Naive thymus-derived CD4-positive, alpha-beta T cell (primary cell): ENCODE measurements at regions of chr3 and their contacts with region 1.

Region 1: GRCh38 chr3:101676765-101677435 is at the start of gene ZBTB11:
- DNase-seq: peak; percentile 98 to 100 (median 99)
- ATAC-seq: peak; percentile 80
- H3K4me3 ChIP-seq: peak within 1 kb of the TSS; percentile 91
- H3K4me3 Mint-ChIP-seq: peak within 1 kb of the TSS; percentile 87 to 97 (median 93)
- H3K27ac ChIP-seq: peak within 1 kb of the TSS; percentile 98
- H3K27ac Mint-ChIP-seq: peak within 1 kb of the TSS; percentile 93 to 100 (median 97)
- H3K4me1 ChIP-seq: peaks cover 23 to 26% of the 10 kb centered on the region in 2 donors
- H3K4me1 Mint-ChIP-seq: peaks cover 19 to 63% (median 54%) of the 10 kb centered on the region in 7 donors
- H3K27me3 ChIP-seq: no peaks in the 10 kb centered on the region
- H3K27me3 Mint-ChIP-seq: no peaks in the 10 kb centered on the region
- total RNA-seq, gene ZBTB11: 31.9 to 68.2 (median 54.2) TPM

Region 2: GRCh38 chr3:100260685-100261484 is 1416.0 kb before region 1 on chr3 and contains the start of gene TBC1D23:
- CTCF ChIA-PET with region 1: no interaction called
- POLR2A ChIA-PET with region 1: no interaction called
- intact Hi-C with region 1: loop called (anchors 1 to 5 kb)
- DNase-seq: peak; percentile 89 to 98 (median 96)
- ATAC-seq: peak; percentile 99
- H3K4me3 ChIP-seq: peak within 1 kb of the TSS; percentile 92
- H3K4me3 Mint-ChIP-seq: peak within 1 kb of the TSS; percentile 90 to 100 (median 94)
- H3K27ac ChIP-seq: peak within 1 kb of the TSS; percentile 89
- H3K27ac Mint-ChIP-seq: peak within 1 kb of the TSS; percentile 97 to 100 (median 99)
- H3K4me1 ChIP-seq: peaks cover 10 to 20% of the 10 kb centered on the region in 2 donors
- H3K4me1 Mint-ChIP-seq: peaks cover 37 to 75% (median 65%) of the 10 kb centered on the region in 7 donors
- H3K27me3 ChIP-seq: no peaks in the 10 kb centered on the region
- H3K27me3 Mint-ChIP-seq: no peaks in the 10 kb centered on the region
- total RNA-seq, gene TBC1D23: 30.8 to 42.4 (median 33.9) TPM

Region 3: GRCh38 chr3:101466465-101467309 is 210.2 kb before region 1 on chr3:
- CTCF ChIA-PET with region 1: no interaction called
- POLR2A ChIA-PET with region 1: no interaction called
- intact Hi-C with region 1: no loop called
- DNase-seq: peak in 8 of 9 donors; percentile 38 to 82 (median 58)
- ATAC-seq: peak; percentile 67
- H3K4me3 ChIP-seq: no peak overlapping the region
- H3K4me3 Mint-ChIP-seq: peak overlapping the region in 8 of 10 donors; percentile 4 to 86 (median 76)
- H3K27ac ChIP-seq: peak overlapping the region; percentile 63
- H3K27ac Mint-ChIP-seq: peak overlapping the region in 8 of 9 donors; percentile 52 to 96 (median 89)
- H3K4me1 ChIP-seq: peaks cover 3 to 17% of the 10 kb centered on the region in 2 donors
- H3K4me1 Mint-ChIP-seq: peaks cover 38 to 81% (median 72%) of the 10 kb centered on the region in 7 donors
- H3K27me3 ChIP-seq: no peaks in the 10 kb centered on the region
- H3K27me3 Mint-ChIP-seq: no peaks in the 10 kb centered on the region

Region 4: DNA sequence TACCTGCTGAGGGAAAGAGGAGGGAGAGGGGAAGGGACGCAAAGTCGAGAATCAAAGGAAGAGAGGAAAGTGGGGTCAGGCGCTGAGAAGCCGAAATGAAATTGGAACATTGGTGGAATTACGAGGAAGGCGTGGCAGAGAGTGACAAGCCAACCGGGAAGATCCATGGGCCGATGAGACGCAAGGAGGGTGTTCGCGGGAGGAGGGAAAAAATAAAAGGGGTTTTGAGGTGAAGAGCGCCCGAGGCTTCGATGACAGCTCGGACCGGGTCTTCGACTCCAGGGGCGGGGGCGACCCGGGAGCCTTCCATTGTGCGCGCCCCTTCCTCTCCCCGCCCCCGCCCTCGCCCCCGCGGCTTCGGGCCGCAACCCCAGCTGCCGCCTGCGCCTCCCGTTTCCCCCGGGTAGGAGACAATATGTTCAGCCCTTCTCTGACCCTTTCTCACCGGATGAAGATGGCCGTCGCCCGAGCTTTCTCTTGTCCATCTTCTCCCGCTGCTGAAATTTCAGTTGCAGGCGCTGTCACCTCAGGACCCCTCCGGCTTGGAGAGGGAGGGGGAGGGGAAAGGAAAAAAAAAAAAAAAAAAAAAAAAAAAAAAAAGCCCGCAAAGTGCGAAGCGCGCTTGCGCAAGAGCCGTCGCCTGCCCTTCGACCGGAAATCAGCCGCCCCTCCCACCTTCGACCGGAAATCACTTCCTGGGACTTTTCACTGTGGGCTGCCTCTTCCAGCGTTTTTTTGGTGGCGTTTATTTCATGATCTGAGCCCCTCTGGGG is 164.1 kb before region 1 on chr3 and contains the start of gene SENP7:
- CTCF ChIA-PET with region 1: interaction called, 3 read pairs
- POLR2A ChIA-PET with region 1: interaction called, 7 read pairs
- intact Hi-C with region 1: loop called (anchors 1 to 2 kb)
- DNase-seq: peak; percentile 55 to 82 (median 76)
- ATAC-seq: peak; percentile 74
- H3K4me3 ChIP-seq: peak within 1 kb of the TSS; percentile 84
- H3K4me3 Mint-ChIP-seq: peak within 1 kb of the TSS; percentile 98 to 100 (median 100)
- H3K27ac ChIP-seq: peak within 1 kb of the TSS; percentile 92
- H3K27ac Mint-ChIP-seq: peak within 1 kb of the TSS; percentile 96 to 100 (median 98)
- H3K4me1 ChIP-seq: peaks cover 24 to 41% of the 10 kb centered on the region in 2 donors
- H3K4me1 Mint-ChIP-seq: peaks cover 35 to 79% (median 70%) of the 10 kb centered on the region in 7 donors
- H3K27me3 ChIP-seq: no peaks in the 10 kb centered on the region
- H3K27me3 Mint-ChIP-seq: peaks cover 0 to 4% (median 0%) of the 10 kb centered on the region in 5 donors
- total RNA-seq, gene SENP7: 28.8 to 79.0 (median 49.5) TPM

Region 5: GRCh38 chr3:101561630-101562328 is 115.1 kb before region 1 on chr3 and contains the start of gene TRMT10C:
- CTCF ChIA-PET with region 1: no interaction called
- POLR2A ChIA-PET with region 1: interaction called, 3 read pairs
- intact Hi-C with region 1: loop called (anchors 1 kb)
- DNase-seq: peak; percentile 77 to 94 (median 91)
- ATAC-seq: peak; percentile 98
- H3K4me3 ChIP-seq: peak within 1 kb of the TSS; percentile 94
- H3K4me3 Mint-ChIP-seq: peak within 1 kb of the TSS; percentile 95 to 99 (median 99)
- H3K27ac ChIP-seq: peak within 1 kb of the TSS; percentile 93
- H3K27ac Mint-ChIP-seq: peak within 1 kb of the TSS; percentile 93 to 99 (median 98)
- H3K4me1 ChIP-seq: peaks cover 8 to 14% of the 10 kb centered on the region in 2 donors
- H3K4me1 Mint-ChIP-seq: peaks cover 19 to 48% (median 38%) of the 10 kb centered on the region in 7 donors
- H3K27me3 ChIP-seq: no peaks in the 10 kb centered on the region
- H3K27me3 Mint-ChIP-seq: peaks cover 2 to 10% (median 3%) of the 10 kb centered on the region in 5 donors
- total RNA-seq, gene TRMT10C: 24.1 to 32.7 (median 27.1) TPM

Region 6: DNA sequence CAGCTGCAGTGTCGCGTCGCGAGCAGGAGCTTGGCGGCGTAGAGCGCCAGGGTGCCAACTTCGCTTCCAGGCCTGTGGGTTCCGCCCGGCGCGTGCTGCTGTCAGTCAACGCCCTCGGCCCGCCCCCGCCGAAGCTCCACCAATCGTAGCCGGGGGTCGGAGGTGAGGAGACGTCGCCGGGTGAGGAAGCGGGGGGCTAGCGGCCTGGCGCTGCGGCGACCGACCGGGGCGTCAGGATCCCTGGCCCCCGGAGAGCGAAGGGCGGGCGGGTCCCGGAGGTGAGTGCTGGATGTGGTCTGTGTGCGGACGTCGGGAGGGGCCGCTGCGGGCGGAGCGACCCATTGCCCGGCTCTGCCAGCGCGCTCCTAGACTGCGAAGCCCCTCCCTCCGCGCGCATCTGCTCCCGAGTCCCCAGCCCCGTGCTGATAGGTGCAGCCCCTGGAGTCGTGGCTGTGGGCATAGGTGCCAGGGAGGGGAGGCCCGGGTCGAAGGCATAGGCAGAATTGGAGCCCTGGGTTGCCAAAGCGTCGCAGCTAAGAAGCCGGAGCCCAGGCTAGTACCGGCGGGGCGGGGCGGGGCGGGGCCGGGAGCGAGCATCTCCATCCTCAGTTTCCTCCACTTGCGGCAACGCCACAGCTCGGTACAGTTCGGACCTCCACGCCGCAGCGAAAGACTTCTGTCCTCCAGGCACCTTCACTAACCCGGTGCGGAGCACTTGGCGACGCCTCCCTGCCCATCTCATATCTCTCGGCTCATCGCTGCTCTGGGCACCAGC is 102.3 kb after region 1 on chr3 and contains the start of gene NXPE3:
- CTCF ChIA-PET with region 1: no interaction called
- POLR2A ChIA-PET with region 1: interaction called, 11 read pairs
- intact Hi-C with region 1: loop called (anchors 1 kb)
- DNase-seq: peak; percentile 92 to 97 (median 94)
- ATAC-seq: peak; percentile 95
- H3K4me3 ChIP-seq: peak within 1 kb of the TSS; percentile 60
- H3K4me3 Mint-ChIP-seq: peak within 1 kb of the TSS; percentile 89 to 99 (median 94)
- H3K27ac ChIP-seq: peak within 1 kb of the TSS; percentile 88
- H3K27ac Mint-ChIP-seq: peak within 1 kb of the TSS; percentile 93 to 100 (median 99)
- H3K4me1 ChIP-seq: peaks cover 27% of the 10 kb centered on the region in 2 donors
- H3K4me1 Mint-ChIP-seq: peaks cover 20 to 61% (median 53%) of the 10 kb centered on the region in 7 donors
- H3K27me3 ChIP-seq: no peaks in the 10 kb centered on the region
- H3K27me3 Mint-ChIP-seq: no peaks in the 10 kb centered on the region
- total RNA-seq, gene NXPE3: 25.9 to 48.7 (median 35.5) TPM

Region 7: DNA sequence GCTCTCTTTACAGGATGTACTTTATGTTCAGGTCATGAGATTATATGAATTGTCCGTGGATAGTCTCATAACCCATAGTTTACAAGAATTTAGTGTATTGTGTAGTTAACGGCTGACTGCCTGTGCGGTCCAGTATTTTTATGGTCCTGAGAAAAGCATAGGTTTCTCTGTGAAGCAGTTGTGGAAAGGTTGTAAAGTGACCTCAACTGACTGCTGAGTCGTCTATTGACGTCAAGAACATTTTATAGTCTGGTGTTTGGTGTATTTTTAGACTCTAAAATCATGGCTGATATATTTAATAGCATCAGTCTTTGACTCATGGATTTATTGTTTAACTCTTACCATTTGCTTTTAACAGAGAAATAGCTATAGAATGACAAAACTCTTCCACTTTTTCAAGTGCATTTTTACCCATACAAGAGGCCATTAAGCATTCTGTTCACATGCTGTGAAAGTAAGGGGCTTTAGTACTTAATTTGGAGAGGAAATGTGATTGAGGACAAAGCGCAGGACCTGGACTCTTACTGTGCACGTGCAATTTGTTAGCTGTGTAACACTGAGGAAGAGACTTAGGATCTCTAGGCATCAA is 413.1 kb after region 1 on chr3:
- CTCF ChIA-PET with region 1: no interaction called
- POLR2A ChIA-PET with region 1: no interaction called
- intact Hi-C with region 1: loop called in 1 of 2 experiments (anchors 10 kb)
- DNase-seq: no peak
- ATAC-seq: no peak
- H3K4me3 ChIP-seq: no peak overlapping the region
- H3K4me3 Mint-ChIP-seq: no peak overlapping the region
- H3K27ac ChIP-seq: no peak overlapping the region
- H3K27ac Mint-ChIP-seq: no peak overlapping the region
- H3K4me1 ChIP-seq: peaks cover 0 to 13% of the 10 kb centered on the region in 2 donors
- H3K4me1 Mint-ChIP-seq: peaks cover 12 to 51% (median 30%) of the 10 kb centered on the region in 7 donors
- H3K27me3 ChIP-seq: no peaks in the 10 kb centered on the region
- H3K27me3 Mint-ChIP-seq: peaks cover 0 to 5% (median 0%) of the 10 kb centered on the region in 5 donors